Activated naive CD4-positive, alpha-beta T cell treated with anti-CD3 and anti-CD28 coated beads for 36 hours (primary cell): ENCODE measurements at regions of chr3 and their contacts with region 1.

Region 1: DNA sequence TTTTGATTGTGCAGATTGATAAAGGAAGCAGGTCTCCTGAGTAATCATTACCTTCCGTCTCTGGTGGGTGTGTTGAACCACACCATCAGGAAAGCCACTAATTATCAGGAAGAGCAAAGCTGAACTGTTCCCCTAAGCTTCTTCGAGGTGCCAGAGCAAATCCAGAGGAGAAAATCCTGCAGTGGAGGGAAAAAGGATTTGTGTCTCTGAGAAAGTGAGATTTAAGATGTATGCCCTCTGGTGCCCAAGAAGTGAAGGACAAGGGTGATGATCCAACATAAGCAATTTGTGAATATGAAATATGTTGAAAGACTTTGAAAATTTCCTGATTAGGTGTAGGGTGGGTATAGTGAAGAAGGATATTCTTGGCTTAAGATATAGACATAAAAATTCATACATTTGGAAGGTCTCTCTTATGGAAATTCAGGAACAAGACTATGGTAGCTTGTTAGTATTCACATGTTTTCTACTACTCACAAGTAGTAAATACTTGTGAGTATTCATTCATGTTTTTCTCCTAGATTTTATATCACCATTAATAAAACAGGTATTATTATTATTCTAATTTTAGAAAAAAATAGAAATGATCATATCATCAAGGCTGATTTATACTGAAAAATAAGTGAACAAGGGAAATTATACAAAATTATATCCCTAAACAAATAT is 34.8 kb downstream of the COMMD2 start:
- DNase-seq: peak; percentile 50
- H3K4me3 Mint-ChIP-seq: no peak overlapping the region
- H3K27ac Mint-ChIP-seq: no peak overlapping the region
- H3K4me1 Mint-ChIP-seq: no peaks in the 10 kb centered on the region
- H3K27me3 Mint-ChIP-seq: no peaks in the 10 kb centered on the region

Region 2: DNA sequence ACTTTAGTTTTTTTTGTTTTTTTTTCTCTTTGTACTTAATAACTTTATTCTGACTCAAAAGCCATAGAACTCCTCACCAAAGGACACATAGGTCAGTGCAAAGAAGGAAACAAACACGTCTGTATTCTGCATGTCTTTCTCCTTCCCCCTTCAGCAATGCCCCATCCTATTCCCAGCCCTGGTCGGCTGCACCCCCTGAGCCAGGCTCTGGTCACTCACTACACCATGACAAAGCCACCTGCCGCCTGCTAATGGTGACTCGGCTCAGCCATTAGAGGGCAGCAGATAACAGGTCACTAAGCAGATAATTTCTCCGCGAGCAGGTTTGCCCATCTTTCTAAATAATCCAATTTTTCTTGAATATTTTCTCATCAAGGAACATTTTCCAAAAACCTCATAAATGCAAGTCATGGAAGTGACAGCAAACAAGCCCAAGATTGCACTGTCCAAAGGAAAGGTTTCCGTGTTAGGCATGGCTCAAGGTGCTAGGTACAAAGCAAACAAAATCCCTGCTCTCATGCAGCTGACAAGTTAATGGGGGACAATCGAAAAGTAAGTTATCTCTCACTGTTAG is 205.2 kb before region 1 on chr3:
- CTCF ChIA-PET with region 1: interaction called, 6 read pairs
- intact Hi-C with region 1: loop called (anchors 1 kb)
- DNase-seq: peak; percentile 59
- H3K4me3 Mint-ChIP-seq: no peak overlapping the region
- H3K27ac Mint-ChIP-seq: no peak overlapping the region
- H3K4me1 Mint-ChIP-seq: peaks cover 14% of the 10 kb centered on the region
- H3K27me3 Mint-ChIP-seq: peaks cover 15% of the 10 kb centered on the region

Region 3: GRCh38 chr3:149527531-149528339 is 189.8 kb before region 1 on chr3:
- CTCF ChIA-PET with region 1: interaction called, 8 read pairs
- intact Hi-C with region 1: loop called (anchors 1 kb)
- DNase-seq: no peak
- H3K4me3 Mint-ChIP-seq: no peak overlapping the region
- H3K27ac Mint-ChIP-seq: no peak overlapping the region
- H3K4me1 Mint-ChIP-seq: no peaks in the 10 kb centered on the region
- H3K27me3 Mint-ChIP-seq: peaks cover 4% of the 10 kb centered on the region